Activated CD4-positive, alpha-beta T cell treated with anti-CD3 and anti-CD28 coated beads for 36 hours (primary cell): ENCODE measurements at regions of chr14 and their contacts with region 1.

Region 1: DNA sequence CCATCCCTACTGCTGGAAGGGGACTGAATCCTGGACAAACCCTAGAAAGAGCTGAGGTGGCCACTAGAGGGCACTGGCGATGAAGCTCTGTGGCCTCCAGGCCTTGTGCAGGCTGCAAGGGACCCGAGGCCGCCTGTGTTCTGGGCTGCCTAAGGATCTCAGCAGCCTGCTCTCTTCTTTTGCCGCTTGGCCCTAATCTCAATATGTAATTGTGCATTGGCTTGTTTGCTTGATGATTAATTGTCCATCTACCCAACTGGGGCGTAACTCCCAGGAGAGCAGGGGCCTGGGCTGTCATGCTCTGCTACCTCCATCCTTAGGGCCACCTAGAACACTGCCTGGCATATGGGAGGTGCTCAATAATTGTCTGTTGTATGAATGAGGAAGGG is 73.8 kb downstream of the SYNE3 start:
- DNase-seq: peak; percentile 87
- ATAC-seq: peak; percentile 98
- H3K4me3 Mint-ChIP-seq: no peak overlapping the region
- H3K27ac Mint-ChIP-seq: peak overlapping the region; percentile 82
- H3K4me1 Mint-ChIP-seq: peaks cover 4% of the 10 kb centered on the region
- H3K27me3 Mint-ChIP-seq: no peaks in the 10 kb centered on the region

Region 2: DNA sequence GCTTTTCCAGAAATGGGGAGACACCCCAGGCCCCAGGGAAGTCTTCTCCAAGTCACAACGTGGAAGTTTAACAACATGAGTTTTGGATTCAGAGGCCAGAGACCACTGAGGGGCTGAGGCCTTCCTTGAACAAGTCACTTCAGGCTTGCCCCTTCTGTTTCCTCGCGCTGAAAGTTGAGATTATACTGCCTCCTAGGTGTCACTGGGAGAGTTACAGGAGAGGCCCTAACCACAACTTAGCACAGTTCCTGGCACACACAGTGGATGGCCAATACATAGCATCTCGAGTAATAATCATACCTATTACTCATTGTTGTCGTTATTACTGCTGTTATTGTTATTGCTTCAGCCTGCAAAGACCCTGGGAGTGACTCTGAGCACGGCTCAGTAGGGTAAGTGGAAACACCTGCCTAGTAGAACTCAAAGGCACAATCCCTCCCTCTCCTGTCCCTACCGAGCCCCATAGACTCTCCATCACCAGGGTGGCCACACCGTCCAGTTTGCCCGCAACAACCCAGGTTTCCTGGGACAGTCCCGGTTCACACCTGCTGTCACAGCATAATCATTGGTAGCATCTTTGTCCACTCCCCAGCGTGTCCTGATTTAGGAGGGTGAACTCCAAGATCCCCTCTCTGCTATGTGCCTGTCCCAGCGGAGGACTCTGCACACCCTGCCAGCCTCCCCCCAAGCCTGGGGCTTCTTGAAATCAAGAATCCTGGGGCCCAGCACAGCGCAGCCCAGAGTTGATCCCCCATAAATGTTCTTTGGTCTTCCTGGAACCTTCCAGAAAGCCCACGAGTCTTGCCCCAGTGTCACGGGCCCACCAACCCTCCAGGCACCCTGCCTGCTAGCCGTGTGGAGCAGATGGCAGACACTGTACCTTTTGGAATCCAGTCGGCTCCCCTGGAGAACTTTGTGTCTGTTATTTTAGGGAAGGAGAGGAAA is 11.2 kb before region 1 on chr14:
- CTCF ChIA-PET with region 1: interaction called, 10 read pairs
- POLR2A ChIA-PET with region 1: no interaction called
- intact Hi-C with region 1: no loop called
- DNase-seq: peak; percentile 28
- ATAC-seq: peak; percentile 73
- H3K4me3 Mint-ChIP-seq: no peak overlapping the region
- H3K27ac Mint-ChIP-seq: no peak overlapping the region
- H3K4me1 Mint-ChIP-seq: no peaks in the 10 kb centered on the region
- H3K27me3 Mint-ChIP-seq: no peaks in the 10 kb centered on the region

Region 3: DNA sequence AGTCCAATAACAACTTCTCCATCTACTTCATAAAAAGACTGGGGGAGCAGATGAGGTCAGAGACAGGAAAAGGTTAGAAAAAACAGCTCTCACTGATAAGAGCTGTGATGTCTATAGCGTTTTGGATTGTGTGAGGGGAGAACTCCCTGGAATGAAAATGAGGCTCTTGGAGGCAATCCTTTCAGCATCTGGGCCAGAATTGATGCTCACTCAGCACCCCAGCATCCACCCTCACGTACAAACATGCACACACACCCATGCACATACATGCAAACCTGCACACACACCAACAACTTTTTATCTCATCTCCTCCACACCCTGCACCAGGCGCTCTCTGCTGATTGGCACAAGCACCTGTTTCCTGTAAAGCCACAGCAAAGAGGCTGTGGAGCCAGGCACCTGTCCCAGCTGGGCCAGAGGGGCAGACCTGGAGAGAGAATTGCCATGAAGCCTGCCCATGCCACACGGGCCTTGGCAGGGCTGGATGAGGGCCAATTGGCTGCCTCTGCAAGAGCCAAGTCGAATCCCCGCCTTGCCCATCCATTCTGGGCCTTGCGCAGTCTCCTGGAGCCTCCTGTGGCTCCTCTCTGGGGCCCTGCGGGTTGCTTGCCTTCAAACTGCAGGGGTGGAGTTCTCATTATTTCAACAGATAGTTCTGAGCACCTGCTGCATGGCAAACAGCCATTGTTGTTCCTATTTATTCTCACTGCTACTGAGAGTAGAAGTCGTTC is 20.7 kb after region 1 on chr14:
- CTCF ChIA-PET with region 1: interaction called, 18 read pairs
- POLR2A ChIA-PET with region 1: no interaction called
- intact Hi-C with region 1: no loop called
- DNase-seq: peak; percentile 44
- ATAC-seq: peak; percentile 65
- H3K4me3 Mint-ChIP-seq: no peak overlapping the region
- H3K27ac Mint-ChIP-seq: peak overlapping the region; percentile 72
- H3K4me1 Mint-ChIP-seq: peaks cover 76% of the 10 kb centered on the region
- H3K27me3 Mint-ChIP-seq: no peaks in the 10 kb centered on the region

Region 4: DNA sequence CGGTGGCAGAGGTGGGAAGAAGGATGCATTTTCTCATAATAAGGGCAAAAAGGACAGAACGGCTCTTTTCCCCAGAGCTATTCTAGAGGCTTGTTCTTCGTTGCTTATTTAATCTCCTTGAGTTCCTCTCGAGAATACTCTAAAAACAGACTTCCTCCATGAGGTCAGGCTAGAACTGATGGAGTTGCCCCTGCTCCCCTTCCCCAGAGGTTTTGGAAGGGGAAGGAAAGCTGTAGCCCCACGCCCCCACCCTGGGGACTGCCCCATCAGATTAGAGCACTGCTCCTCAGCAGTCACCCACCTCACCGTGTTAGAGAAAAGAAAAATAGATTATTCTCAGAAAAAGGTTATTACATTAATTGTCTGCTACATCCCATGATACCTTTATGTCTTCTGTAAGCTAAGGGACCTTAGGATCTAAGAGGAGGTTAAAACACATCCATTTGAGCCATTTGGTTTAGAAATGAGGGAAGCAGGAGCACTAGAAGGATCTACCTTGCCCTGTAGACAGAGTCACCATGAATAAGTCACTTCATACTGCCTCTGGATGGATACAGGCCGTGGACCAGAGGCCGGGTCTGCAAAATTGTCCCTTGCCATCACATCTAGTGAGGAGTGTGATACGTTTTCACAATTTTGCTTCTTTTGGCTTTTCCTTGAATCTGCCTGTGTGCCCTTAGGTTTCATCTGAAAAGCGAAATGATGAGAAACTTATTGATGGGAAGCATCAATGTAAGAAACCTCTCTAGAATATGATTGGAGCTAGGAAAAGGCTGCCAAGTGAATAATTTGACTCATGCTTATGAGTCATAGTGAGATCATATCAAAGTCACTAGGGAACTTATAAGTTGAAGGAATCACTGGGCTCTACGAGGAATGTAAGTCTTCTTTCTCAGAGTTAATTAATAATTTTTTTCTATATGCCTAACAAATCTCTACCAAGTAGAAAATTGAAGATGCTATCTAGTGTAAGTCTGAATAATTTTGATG is 102.8 kb after region 1 on chr14:
- CTCF ChIA-PET with region 1: interaction called, 10 read pairs
- POLR2A ChIA-PET with region 1: no interaction called
- intact Hi-C with region 1: no loop called
- DNase-seq: no peak
- ATAC-seq: peak; percentile 60
- H3K4me3 Mint-ChIP-seq: no peak overlapping the region
- H3K27ac Mint-ChIP-seq: no peak overlapping the region
- H3K4me1 Mint-ChIP-seq: peaks cover 17% of the 10 kb centered on the region
- H3K27me3 Mint-ChIP-seq: no peaks in the 10 kb centered on the region